Breast epithelium (tissue), 4 donors: ENCODE measurements at regions of chr9 and their contacts with region 1.

Region 1: DNA sequence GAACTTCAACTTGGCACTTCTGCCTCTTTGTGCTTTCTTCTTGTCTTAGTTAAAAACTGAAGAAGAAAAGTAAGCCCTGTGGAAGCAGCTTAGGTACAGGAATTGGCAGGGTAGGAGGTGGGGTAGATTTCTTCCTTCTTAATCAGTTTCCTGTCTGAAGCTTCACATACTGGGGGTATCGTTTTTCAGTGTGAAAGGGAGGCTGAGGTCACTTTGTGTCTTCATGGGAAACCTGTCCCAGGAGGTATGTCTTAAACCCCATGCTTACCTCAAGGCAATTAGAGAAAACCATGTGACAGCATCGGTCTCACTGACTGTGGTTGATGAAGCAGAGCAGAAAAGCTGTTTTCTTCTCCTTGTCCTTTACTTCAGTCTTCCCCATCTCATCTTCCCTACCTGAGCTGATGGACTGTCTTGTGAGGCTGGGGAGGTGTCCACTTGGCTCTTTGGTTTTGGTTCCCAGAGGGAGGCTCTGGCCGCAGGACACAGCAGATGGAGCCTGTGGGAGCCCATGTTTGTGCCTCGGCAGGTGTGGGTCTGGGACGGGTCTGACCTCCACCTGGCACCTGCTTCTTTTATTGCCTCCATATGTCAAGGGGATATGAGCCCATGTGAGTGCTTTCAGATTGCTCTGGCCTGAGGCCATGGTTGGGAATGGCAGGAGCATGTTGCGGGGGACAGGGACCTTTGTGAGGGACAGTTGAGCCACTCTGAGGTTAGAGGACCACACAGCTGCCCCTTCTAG is 47.0 kb downstream of the SH3GL2 start:
- DNase-seq: no peak
- H3K4me3 ChIP-seq: no peak overlapping the region
- H3K27ac ChIP-seq: no peak overlapping the region
- H3K4me1 ChIP-seq: no peaks in the 10 kb centered on the region
- H3K27me3 ChIP-seq: no peaks in the 10 kb centered on the region
- CTCF ChIP-seq: no peak
- POLR2A ChIP-seq: no peak

Region 2: GRCh38 chr9:17580119-17580518 is 45.7 kb before region 1 on chr9:
- intact Hi-C with region 1: loop called (anchors 2 kb)
- DNase-seq: no peak
- H3K4me3 ChIP-seq: no peak overlapping the region
- H3K27ac ChIP-seq: no peak overlapping the region
- H3K4me1 ChIP-seq: no peaks in the 10 kb centered on the region
- H3K27me3 ChIP-seq: peaks cover 0 to 35% of the 10 kb centered on the region in 2 donors
- CTCF ChIP-seq: no peak
- POLR2A ChIP-seq: no peak